ENCODE measurements at regions of chr11 and their contacts with region 1.

Region 1: GRCh38 chr11:57751676-57752253 is at the start of gene BTBD18:
- DNase-seq: peak; percentile 66 to 67
- H3K4me3 ChIP-seq: no peak within 1 kb of the TSS
- H3K4me3 Mint-ChIP-seq: no peak within 1 kb of the TSS
- H3K27ac Mint-ChIP-seq: peak within 1 kb of the TSS; percentile 12
- H3K4me1 ChIP-seq: peaks cover 12% of the 10 kb centered on the region; the same call in 1 of the 2 replicates
- H3K4me1 Mint-ChIP-seq: peaks cover 19% of the 10 kb centered on the region
- H3K27me3 ChIP-seq: no peaks in the 10 kb centered on the region
- H3K27me3 Mint-ChIP-seq: no peaks in the 10 kb centered on the region
- CTCF ChIP-seq: peak; percentile 54 to 58
- total RNA-seq, gene BTBD18: not detected in 2 replicates

Region 2: GRCh38 chr11:57787920-57788702 is 36.3 kb after region 1 on chr11:
- CTCF ChIA-PET with region 1: interaction called, 10 read pairs
- POLR2A ChIA-PET with region 1: no interaction called
- intact Hi-C with region 1: no loop called
- DNase-seq: peak; percentile 62 to 77
- H3K4me3 ChIP-seq: no peak overlapping the region
- H3K4me3 Mint-ChIP-seq: peak overlapping the region; percentile 64
- H3K27ac Mint-ChIP-seq: peak overlapping the region; percentile 86
- H3K4me1 ChIP-seq: peaks cover 95% of the 10 kb centered on the region
- H3K4me1 Mint-ChIP-seq: peaks cover 49% of the 10 kb centered on the region
- H3K27me3 ChIP-seq: no peaks in the 10 kb centered on the region
- H3K27me3 Mint-ChIP-seq: no peaks in the 10 kb centered on the region
- CTCF ChIP-seq: no peak

Measured in Caco-2 (cell line).